Calu3 (cell line): ENCODE measurements at regions of chr12 and their contacts with region 1.

Region 1: GRCh38 chr12:57583008-57583831 is 7.8 kb upstream of the PIP4K2C start:
- DNase-seq: peak; percentile 80
- H3K4me3 Mint-ChIP-seq: no peak overlapping the region
- H3K27ac Mint-ChIP-seq: peak overlapping the region; percentile 18
- H3K4me1 Mint-ChIP-seq: peaks cover 15% of the 10 kb centered on the region
- H3K27me3 Mint-ChIP-seq: peaks cover 13% of the 10 kb centered on the region
- CTCF ChIP-seq: peak; percentile 91

Region 2: GRCh38 chr12:57546438-57547383 is 36.5 kb before region 1 on chr12 and contains the start of gene DCTN2:
- CTCF ChIA-PET with region 1: interaction called, 10 read pairs
- intact Hi-C with region 1: no loop called
- DNase-seq: peak; percentile 97
- H3K4me3 Mint-ChIP-seq: peak within 1 kb of the TSS; percentile 98
- H3K27ac Mint-ChIP-seq: peak within 1 kb of the TSS; percentile 93
- H3K4me1 Mint-ChIP-seq: peaks cover 33% of the 10 kb centered on the region
- H3K27me3 Mint-ChIP-seq: peaks cover 42% of the 10 kb centered on the region
- CTCF ChIP-seq: no peak
- total RNA-seq, gene DCTN2: 121 and 131 TPM in 2 replicates

Region 3: DNA sequence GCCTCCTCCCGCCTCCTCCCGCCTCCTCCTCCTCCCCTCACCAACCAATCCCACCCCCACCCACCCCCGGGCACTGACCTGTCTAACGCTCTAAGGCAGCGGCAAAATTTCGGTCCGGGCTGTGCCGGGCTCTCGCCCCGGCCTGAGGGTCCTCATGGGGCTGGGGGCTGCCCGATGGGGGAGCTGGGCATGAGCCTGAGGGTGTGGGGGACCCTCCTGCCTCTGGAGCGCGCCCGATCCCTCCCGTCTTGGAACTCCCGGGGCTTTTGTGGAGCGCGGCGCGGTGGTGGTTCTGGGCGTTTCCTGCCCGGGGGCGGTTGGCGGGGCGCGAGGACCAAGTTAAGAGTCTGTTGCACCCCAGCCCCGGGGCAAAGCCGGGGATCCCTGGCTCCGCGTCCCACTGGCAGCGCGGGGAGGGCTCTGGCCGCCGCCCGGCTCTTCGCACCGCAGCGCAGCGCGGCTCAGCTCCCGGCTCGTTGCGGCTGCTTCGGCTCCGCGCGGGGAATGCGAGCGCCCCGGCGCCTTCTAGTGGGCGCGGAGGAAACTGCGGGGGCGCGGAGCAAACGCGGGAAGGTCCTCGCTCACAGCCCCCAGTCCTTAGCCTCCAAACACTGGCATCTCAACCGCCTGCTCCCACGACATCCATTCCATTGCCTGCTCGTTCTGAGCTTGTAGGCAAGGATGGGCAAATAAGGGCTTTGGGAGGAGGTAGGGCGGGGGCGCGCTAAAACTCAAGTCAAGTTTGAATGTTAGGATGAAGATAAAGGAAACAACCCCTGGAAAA is 49.7 kb after region 1 on chr12 and contains the start of gene B4GALNT1:
- CTCF ChIA-PET with region 1: interaction called, 11 read pairs
- intact Hi-C with region 1: no loop called
- DNase-seq: peak; percentile 84
- H3K4me3 Mint-ChIP-seq: peak within 1 kb of the TSS; percentile 84
- H3K27ac Mint-ChIP-seq: peak within 1 kb of the TSS; percentile 14
- H3K4me1 Mint-ChIP-seq: peaks cover 20% of the 10 kb centered on the region
- H3K27me3 Mint-ChIP-seq: no peaks in the 10 kb centered on the region
- CTCF ChIP-seq: peak; percentile 92
- total RNA-seq, gene B4GALNT1: 8.1 and 11.1 TPM in 2 replicates

Region 4: GRCh38 chr12:57735952-57736740 is 152.9 kb after region 1 on chr12:
- CTCF ChIA-PET with region 1: interaction called, 17 read pairs
- intact Hi-C with region 1: loop called (anchors 2 kb)
- DNase-seq: peak; percentile 48
- H3K4me3 Mint-ChIP-seq: peak overlapping the region; percentile 57
- H3K27ac Mint-ChIP-seq: peak overlapping the region; percentile 2
- H3K4me1 Mint-ChIP-seq: peaks cover 28% of the 10 kb centered on the region
- H3K27me3 Mint-ChIP-seq: peaks cover 92% of the 10 kb centered on the region
- CTCF ChIP-seq: no peak